Left ventricle myocardium superior (tissue), 1 donor: ENCODE measurements at regions of chr10 and their contacts with region 1.

Region 1: DNA sequence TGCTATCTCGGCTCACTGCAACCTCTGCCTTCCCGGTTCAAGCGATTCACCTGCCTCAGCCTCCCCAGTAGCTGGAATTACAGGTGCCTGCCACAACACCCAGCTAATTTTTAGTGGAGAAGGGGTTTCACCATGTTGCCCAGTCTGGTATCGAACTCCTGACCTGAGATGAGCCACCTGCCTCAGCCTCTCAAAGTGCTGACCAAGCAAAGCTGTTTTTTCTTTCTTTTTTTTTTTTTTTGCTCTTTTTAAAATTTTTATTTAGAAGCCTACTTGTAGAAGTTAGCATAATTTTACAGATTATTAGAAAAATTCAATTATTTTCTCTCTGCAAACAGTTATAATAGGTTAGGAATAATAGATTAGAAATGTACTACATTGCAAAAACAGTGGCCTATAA is 1.2 kb upstream of the FGFBP3 start:
- DNase-seq: no peak
- ATAC-seq: no peak

Region 2: DNA sequence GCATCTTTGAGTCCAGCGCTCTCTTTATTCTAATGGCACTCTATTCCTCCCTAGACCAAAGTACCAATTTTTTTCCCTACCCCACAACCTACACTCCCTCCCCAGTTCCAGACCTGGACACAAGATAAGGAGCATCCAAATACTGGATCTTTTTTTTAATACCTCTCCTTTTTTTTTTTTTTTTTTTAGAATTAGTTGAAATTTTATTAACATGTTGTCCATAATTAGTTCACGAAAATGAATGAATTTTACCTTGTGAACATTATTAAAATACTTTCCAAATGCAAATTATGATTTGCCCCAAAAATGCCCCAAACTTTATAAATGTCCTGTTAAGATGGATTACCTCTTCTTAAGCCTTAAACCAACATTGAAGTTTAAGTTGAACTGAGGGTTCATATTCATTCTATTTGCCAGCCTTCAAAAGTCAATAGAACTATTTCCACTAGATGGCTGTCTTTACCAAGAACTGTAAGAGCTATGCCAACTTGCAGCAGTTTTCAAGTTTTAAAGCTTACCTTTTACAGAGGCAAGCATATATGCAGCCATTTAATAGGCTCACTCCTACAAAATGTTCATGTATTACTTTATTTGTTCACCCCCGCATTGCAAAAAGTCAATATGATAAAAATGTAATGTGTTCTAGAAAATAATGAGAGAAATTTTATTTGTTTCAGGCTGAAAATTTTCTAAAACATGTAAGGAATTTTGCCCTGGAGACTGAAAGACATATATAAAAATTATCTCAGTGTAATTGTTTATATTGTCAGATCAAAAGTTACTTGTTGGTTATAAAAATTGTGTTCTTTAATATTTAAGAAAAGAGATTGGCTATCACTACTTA is 151.9 kb before region 1 on chr10:
- intact Hi-C with region 1: loop called (anchors 10 kb)
- DNase-seq: no peak
- ATAC-seq: peak; percentile 32

Region 3: DNA sequence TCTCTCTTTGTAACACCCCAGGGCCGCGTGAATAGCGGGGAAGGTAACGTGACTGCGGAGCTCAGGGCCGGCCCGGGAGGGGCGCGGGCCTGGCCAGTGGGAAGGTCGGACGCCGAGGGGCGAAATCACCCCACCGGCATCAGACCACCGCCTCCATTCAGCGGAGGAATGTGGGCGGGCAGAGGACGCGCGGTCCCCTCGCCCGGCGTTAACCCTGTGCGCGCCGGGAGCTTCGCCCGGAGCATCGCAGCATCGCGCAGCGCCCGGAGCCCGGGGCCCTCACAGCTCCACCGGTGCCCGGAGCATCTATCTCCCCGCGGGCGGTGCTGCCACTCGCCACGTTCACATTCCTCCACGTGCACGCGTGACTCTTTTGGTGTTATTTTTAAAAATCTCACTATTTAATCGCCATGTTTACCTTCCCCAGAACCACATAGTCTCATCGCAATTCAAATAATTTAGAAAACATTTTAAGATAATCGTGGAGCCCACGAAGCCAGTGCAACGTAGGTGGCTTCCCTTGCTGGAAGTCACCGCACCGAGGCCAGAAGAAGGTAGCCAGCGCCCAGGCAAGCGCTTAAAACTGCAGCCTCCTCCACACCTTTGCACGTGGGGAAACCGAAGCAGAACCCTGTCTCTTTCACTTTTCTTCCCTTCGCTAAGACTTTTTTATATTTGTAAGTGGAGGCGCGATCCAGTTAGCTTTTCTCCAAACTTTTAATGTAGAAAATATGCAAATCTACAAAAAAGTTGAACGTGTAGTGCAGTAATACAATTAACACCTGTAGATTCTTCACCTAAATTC is 23.0 kb before region 1 on chr10:
- intact Hi-C with region 1: no loop called
- DNase-seq: peak; percentile 31
- ATAC-seq: peak; percentile 60

Region 4: DNA sequence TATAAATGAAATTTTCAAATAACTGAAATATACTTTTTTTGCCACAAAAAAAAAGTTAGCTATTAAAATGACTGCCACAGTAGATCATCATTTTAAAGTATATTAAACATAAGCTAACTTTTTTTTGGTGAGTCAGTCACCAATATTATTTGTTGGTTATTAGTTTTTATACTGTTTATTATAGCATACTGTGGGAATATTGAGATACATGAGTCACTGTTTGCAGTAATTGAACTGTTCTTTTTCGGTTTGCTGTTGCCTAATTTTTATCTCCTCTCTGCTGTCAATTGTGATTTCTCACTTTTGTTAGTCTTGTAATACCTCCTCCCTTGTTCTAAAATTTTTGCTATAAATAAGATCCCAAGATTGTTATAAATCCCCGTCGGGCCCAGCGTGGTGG is 58.8 kb after region 1 on chr10:
- intact Hi-C with region 1: no loop called
- DNase-seq: no peak
- ATAC-seq: no peak